H1 (cell line): ENCODE measurements at regions of chr2 and their contacts with region 1.

Region 1: GRCh38 chr2:11688222-11689069 is 18.5 kb upstream of the NTSR2 start:
- DNase-seq: peak in 1 of 2 experiments; percentile 94
- H3K4me3 ChIP-seq: peak overlapping the region in 3 of 4 experiments; percentile 25 to 49 (median 36); a peak in 5 of 8 replicates
- H3K27ac ChIP-seq: no peak overlapping the region
- H3K4me1 ChIP-seq: peaks cover 0 to 3% (median 0%) of the 10 kb centered on the region in 4 experiments; a peak in 2 of 7 replicates
- H3K27me3 ChIP-seq: peaks cover 0 to 2% (median 0%) of the 10 kb centered on the region in 4 experiments; a peak in 1 of 7 replicates
- CTCF ChIP-seq: peak; percentile 80 to 88 (median 82)
- EP300 ChIP-seq: no peak
- POLR2A ChIP-seq: no peak
- RAD21 ChIP-seq: peak; percentile 69 to 79

Region 2: GRCh38 chr2:11430729-11431128 is 257.7 kb before region 1 on chr2:
- CTCF ChIA-PET with region 1: no interaction called
- POLR2A ChIA-PET with region 1: no interaction called
- DNase-seq: no peak
- H3K4me3 ChIP-seq: no peak overlapping the region
- H3K27ac ChIP-seq: no peak overlapping the region
- H3K4me1 ChIP-seq: no peaks in the 10 kb centered on the region
- H3K27me3 ChIP-seq: no peaks in the 10 kb centered on the region
- CTCF ChIP-seq: no peak
- EP300 ChIP-seq: no peak
- POLR2A ChIP-seq: no peak
- RAD21 ChIP-seq: no peak

Region 3: DNA sequence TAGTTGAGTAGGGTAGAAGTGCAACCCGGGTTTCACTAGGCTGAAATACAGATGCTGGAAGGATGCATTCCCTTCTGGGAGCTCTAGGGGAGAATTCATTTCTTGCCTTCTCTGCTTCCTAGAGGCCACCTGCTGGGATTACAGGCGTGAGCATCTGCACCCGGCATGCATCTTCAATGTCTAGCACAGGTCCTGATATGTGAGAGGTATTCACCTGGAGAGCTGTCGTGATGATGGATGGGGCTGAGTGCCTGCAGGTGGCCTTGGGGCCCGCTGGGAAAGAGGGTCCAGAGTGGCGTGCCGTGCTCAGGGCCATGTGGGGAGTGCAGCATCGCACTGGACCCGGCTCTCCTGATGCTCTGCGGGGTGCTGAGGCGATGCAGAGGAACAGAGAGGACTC is 11.8 kb before region 1 on chr2:
- CTCF ChIA-PET with region 1: interaction called, 91 read pairs
- POLR2A ChIA-PET with region 1: no interaction called
- DNase-seq: no peak
- H3K4me3 ChIP-seq: no peak overlapping the region
- H3K27ac ChIP-seq: no peak overlapping the region
- H3K4me1 ChIP-seq: peaks cover 3 to 14% (median 9%) of the 10 kb centered on the region in 4 experiments; a peak in 6 of 7 replicates
- H3K27me3 ChIP-seq: no peaks in the 10 kb centered on the region; a peak in 1 of 7 replicates
- CTCF ChIP-seq: no peak
- EP300 ChIP-seq: no peak
- POLR2A ChIP-seq: no peak
- RAD21 ChIP-seq: no peak

Region 4: GRCh38 chr2:11726384-11726783 is 37.9 kb after region 1 on chr2:
- CTCF ChIA-PET with region 1: interaction called, 10 read pairs
- POLR2A ChIA-PET with region 1: no interaction called
- DNase-seq: no peak
- H3K4me3 ChIP-seq: no peak overlapping the region
- H3K27ac ChIP-seq: no peak overlapping the region
- H3K4me1 ChIP-seq: peaks cover 0 to 3% (median 0%) of the 10 kb centered on the region in 4 experiments; a peak in 3 of 7 replicates
- H3K27me3 ChIP-seq: no peaks in the 10 kb centered on the region
- CTCF ChIP-seq: no peak
- EP300 ChIP-seq: no peak
- POLR2A ChIP-seq: no peak
- RAD21 ChIP-seq: no peak

Region 5: DNA sequence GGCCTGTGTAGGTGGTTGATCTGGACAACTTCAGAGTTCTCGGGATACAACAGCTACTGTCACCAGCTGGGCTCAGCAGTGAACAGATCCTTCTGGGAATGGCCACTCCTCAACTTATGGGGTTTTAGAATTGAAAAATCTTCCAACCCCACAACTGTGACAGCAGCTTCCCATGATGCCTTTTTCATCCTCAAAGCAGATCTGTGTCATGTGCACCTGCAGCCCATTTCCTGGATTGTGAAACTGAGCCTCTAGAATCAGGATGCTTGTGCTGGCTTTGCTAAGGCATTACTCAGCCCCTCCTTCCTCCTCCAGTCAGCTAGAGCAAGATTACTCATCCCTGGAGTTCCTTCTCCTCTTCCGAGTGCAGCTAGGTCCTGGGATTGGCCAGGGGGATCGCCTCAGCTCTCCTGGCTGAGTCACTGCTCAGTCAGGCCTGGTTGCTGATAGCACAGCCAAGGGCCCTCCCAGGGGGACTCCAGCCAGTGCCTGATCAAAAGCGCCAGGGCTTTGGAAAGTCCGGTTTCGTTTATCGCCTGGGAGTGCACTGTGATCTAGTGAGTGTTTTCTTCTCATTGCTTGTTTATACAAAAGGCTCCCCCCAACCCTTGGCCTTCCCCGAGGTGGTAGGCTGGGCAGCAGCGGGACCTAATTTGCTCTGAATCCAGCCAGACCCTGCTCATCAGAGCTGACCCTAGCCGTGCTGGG is 55.6 kb after region 1 on chr2:
- CTCF ChIA-PET with region 1: interaction called, 25 read pairs
- POLR2A ChIA-PET with region 1: no interaction called
- DNase-seq: peak; percentile 64 to 81
- H3K4me3 ChIP-seq: no peak overlapping the region
- H3K27ac ChIP-seq: no peak overlapping the region
- H3K4me1 ChIP-seq: peaks cover 6 to 33% (median 22%) of the 10 kb centered on the region in 4 experiments
- H3K27me3 ChIP-seq: peaks cover 0 to 5% (median 0%) of the 10 kb centered on the region in 4 experiments; a peak in 2 of 7 replicates
- CTCF ChIP-seq: no peak
- EP300 ChIP-seq: 0 out of 3 replicates have a peak, but pooled peaks of 1 of the 2 experiments have one; percentile 6
- POLR2A ChIP-seq: no peak
- RAD21 ChIP-seq: 0 out of 4 replicates have a peak, but pooled peaks of 1 of the 2 experiments have one; percentile 3

Region 6: DNA sequence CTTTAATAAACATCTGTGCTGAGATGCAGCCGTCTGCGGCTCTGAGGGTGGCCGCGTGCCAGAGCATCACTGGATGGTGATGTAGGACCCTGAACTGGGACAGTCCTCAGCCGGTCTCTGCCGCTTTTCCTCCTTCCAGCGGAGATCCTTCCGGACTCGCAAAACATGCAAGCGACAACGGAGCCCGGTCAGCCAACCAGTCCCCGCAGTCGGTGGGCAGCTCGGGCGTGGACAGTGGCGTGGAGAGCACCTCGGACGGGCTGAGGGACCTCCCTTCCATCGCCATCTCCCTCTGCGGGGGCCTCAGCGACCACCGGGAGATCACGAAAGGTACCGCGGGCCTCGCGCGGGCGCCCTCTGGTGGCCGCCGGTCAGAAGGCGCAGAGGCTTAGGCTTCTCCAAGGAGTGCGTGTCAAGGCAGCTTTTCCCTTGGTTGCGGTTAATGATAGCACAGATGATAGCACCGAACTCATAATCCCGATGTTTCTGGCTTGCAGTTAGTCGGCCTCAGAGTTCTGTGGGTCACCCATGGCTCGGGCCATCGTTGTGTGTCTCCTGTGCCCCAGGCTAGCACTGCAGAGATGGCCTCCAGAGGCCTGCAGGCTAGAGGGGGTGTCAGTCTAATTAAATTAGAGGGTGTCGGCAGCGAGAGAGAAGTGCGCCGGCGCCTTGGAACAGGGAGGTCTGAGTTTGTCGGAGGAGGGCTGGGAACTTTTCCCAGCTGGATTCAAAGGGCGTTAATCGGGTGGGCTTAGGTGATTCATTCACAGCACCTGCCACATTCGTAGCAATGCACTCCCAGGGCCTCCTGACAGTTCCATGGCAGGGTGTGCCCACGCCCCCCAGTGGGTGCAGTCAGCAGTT is 96.5 kb after region 1 on chr2:
- CTCF ChIA-PET with region 1: interaction called, 81 read pairs
- POLR2A ChIA-PET with region 1: no interaction called
- DNase-seq: peak; percentile 17 to 93
- H3K4me3 ChIP-seq: peak overlapping the region; percentile 39 to 55 (median 43); a peak in 7 of 8 replicates
- H3K27ac ChIP-seq: no peak overlapping the region
- H3K4me1 ChIP-seq: 0 out of 7 replicates have a peak, but pooled peaks cover 0 to 4% (median 0%) of the 10 kb centered on the region in 4 experiments
- H3K27me3 ChIP-seq: no peaks in the 10 kb centered on the region; a peak in 2 of 7 replicates
- CTCF ChIP-seq: peak; percentile 81 to 94 (median 88)
- EP300 ChIP-seq: no peak
- POLR2A ChIP-seq: no peak
- RAD21 ChIP-seq: peak; percentile 45 to 59